ENCODE measurements at regions of chr15 and their contacts with region 1.

Region 1: DNA sequence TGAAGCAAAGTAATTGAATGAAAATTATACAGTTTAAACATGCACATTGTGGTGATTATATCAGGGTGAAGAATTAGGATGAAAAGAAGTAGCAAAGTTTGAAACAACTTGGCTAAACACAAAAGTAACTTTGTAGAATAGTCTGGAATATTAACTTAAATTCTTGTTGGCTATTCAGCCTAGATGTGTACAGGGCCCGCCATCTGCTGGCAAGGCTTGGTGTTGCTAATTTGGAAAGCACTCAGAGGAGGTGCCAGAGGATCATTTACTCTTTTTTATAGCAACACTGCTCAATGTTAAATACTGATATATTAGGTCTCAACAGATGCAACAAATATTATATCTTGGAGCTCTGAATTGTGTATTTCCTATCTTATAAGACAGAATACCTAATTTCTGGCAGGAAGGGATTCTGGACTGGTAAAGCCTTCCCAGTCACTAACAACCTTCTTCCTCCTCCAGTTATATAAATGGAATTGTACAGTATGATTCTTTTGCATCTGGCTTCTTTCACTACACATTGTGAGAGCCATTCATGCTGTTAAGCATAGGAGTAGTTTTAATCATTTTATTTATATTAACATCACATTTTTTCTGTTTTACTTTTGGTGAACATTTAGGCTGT is 36.1 kb downstream of the TTC23 start:
- DNase-seq: peak; percentile 40 to 82
- H3K4me3 ChIP-seq: no peak overlapping the region
- H3K4me1 ChIP-seq: peaks cover 5% of the 10 kb centered on the region
- H3K27me3 ChIP-seq: no peaks in the 10 kb centered on the region

Region 2: DNA sequence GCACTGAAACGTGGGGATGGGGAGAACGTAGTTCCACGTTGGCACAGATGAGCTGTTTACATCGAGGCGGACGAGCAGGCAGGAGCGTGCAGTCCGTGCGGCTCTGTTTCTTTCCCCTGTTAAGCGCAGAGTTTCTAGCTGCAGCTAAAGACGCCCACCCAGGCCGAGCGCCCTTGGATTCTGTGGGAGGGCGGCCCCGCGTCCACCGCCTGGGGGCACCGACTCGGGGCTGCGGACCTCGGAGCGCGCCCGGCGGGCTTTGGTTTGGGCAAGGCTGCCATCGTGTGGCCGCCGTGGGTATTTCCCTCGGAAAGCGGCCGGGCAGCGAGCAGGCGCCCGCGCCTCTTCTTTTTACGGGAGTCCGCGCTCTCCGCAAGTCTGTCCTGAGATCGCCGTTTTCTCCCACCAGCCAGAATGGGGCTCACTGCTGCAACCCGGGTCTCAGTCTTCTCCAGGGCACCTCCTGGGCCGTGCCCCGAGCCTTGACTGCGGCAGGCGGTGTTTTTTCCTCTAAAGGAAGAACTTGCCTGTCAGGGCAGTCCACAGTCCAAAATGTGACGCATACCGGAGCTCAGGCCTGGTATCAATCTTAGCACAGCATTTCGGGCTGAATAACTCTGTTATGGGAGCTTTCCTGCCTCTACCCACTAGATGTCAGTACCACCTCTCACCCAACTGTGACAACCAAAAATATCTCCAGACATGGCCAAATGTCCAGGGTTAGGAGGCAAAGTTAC is 784.9 kb before region 1 on chr15:
- in situ Hi-C with region 1: loop called (anchors 25 kb)
- DNase-seq: peak; percentile 42 to 86
- H3K4me3 ChIP-seq: peak overlapping the region; percentile 25
- H3K4me1 ChIP-seq: no peaks in the 10 kb centered on the region
- H3K27me3 ChIP-seq: no peaks in the 10 kb centered on the region

Region 3: DNA sequence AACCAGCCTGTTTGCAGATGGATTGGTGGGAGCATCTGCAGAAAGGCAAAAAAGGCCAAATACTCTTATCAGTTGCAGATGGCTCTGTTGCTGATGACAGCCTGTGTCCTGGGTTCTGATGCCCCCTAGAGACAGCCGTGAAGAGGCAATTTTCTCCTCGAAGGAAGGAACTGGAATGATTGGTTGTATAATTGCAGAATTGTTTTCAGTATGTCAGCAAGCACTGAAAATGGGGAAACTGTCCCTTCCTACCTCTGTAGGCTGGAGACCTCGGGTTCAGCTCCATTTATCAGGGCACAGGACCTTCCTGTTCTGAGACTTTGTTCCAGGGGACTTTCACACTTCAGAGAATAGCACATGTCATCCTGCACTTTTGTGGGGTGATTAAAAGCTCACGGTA is 308.8 kb before region 1 on chr15:
- in situ Hi-C with region 1: loop called (anchors 25 kb)
- DNase-seq: peak; percentile 36 to 53
- H3K4me3 ChIP-seq: no peak overlapping the region
- H3K4me1 ChIP-seq: peaks cover 34% of the 10 kb centered on the region
- H3K27me3 ChIP-seq: no peaks in the 10 kb centered on the region

Region 4: DNA sequence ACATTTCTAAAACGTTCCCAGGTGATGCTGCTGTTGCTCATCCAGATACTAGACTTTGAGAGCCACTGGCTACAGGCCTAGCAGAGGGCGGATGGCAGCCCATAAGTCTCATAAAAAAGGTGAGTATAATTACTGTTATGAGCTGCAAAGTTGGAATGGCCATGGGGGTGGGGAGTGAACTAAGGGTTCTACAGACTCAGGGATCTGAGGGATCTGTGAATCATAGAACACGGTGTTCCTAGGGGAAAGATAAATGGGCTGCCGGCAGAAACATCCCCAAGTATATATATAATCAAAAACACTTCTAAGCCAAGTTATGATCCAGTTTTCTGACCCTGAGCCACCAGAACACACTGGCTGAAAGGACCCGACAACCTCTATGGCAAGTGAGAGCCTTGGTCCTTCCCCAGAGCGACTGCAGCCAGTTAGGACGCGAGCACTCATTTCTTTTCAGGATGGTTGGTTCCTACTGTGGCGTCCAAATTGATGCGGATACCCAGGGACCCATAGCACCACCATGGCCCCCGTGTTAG is 116.3 kb before region 1 on chr15:
- in situ Hi-C with region 1: loop called (anchors 5 kb)
- DNase-seq: no peak
- H3K4me3 ChIP-seq: no peak overlapping the region
- H3K4me1 ChIP-seq: no peaks in the 10 kb centered on the region; the same call in 1 of the 2 replicates
- H3K27me3 ChIP-seq: no peaks in the 10 kb centered on the region

Region 5: DNA sequence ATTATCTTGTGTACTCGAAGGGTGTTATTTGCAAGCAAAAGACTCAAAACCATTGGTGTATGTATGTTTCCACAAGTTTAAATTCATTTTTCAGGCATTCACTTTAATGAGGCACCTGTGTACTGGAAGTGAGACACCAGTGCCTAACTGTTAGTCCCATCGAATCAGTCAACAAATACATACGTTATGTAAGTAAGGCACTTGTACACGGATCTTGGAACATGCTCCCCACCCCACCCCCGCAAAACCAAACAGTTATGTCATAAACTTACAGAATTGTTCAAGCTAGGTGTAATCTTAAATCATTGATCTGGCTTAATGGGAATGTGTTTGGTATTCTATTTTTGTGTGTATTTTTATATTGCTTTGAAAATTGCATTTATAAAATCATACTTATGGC is 55.1 kb after region 1 on chr15:
- in situ Hi-C with region 1: no loop called
- DNase-seq: no peak
- H3K4me3 ChIP-seq: no peak overlapping the region
- H3K4me1 ChIP-seq: no peaks in the 10 kb centered on the region
- H3K27me3 ChIP-seq: no peaks in the 10 kb centered on the region

Measured in HAP-1 (cell line).